ENCODE measurements at regions of chrX and their contacts with region 1.

Region 1: GRCh38 chrX:129553619-129554288 is 13.7 kb downstream of the OCRL start:
- DNase-seq: no peak
- ATAC-seq: peak; percentile 92
- H3K4me3 Mint-ChIP-seq: no peak overlapping the region
- H3K27ac Mint-ChIP-seq: no peak overlapping the region
- H3K4me1 Mint-ChIP-seq: peaks cover 6% of the 10 kb centered on the region
- H3K27me3 Mint-ChIP-seq: no peaks in the 10 kb centered on the region
- CTCF ChIP-seq: no peak

Region 2: GRCh38 chrX:129450123-129450522 is 103.6 kb before region 1 on chrX:
- CTCF ChIA-PET with region 1: no interaction called
- POLR2A ChIA-PET with region 1: no interaction called
- intact Hi-C with region 1: no loop called
- DNase-seq: no peak
- ATAC-seq: no peak
- H3K4me3 Mint-ChIP-seq: no peak overlapping the region
- H3K27ac Mint-ChIP-seq: no peak overlapping the region
- H3K4me1 Mint-ChIP-seq: no peaks in the 10 kb centered on the region
- H3K27me3 Mint-ChIP-seq: no peaks in the 10 kb centered on the region
- CTCF ChIP-seq: no peak

Region 3: DNA sequence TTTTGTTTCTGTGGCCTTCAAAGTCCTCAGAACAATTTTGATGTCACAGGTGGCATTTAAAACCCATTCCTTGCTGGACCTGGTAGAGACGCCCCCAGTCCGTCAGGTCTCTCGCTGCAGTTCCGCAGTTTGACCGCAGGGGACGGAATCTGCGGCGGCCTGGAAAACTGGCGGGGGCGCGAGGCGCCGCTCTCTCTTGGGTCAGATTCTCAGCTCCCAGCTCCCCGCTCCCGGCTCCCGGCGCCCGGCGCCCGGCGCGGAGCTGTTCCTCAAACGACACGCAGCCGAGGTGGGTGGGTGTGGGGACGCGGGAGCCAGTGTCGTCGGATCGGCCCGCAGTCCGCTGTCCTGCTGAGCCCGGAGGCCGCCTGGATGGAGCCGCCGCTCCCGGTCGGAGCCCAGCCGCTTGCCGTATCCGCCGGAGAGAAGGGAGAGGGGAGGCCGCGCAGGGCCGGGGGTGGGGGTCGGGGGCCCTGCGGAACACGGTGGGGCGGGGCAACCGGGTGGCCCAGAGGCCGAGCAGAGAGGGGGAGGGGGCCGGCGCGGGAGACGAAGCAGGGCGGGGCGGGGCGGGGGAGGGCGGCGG is 13.6 kb before region 1 on chrX and contains the start of gene OCRL:
- CTCF ChIA-PET with region 1: no interaction called
- POLR2A ChIA-PET with region 1: no interaction called
- intact Hi-C with region 1: loop called (anchors 1 kb)
- DNase-seq: peak; percentile 37
- ATAC-seq: peak; percentile 89
- H3K4me3 Mint-ChIP-seq: peak within 1 kb of the TSS; percentile 80
- H3K27ac Mint-ChIP-seq: no peak within 1 kb of the TSS
- H3K4me1 Mint-ChIP-seq: peaks cover 5% of the 10 kb centered on the region
- H3K27me3 Mint-ChIP-seq: peaks cover 3% of the 10 kb centered on the region
- CTCF ChIP-seq: no peak
- total RNA-seq, gene OCRL: 5.4 and 7.5 TPM in 2 replicates

Region 4: GRCh38 chrX:129717892-129718291 is 164.1 kb after region 1 on chrX:
- CTCF ChIA-PET with region 1: no interaction called
- POLR2A ChIA-PET with region 1: no interaction called
- intact Hi-C with region 1: no loop called
- DNase-seq: no peak
- ATAC-seq: no peak
- H3K4me3 Mint-ChIP-seq: no peak overlapping the region
- H3K27ac Mint-ChIP-seq: no peak overlapping the region
- H3K4me1 Mint-ChIP-seq: peaks cover 4% of the 10 kb centered on the region
- H3K27me3 Mint-ChIP-seq: no peaks in the 10 kb centered on the region
- CTCF ChIP-seq: no peak

Measured in activated B cell treated with CpG ODN at 0.5 μM for 24 hours (primary cell).